H1 (cell line): ENCODE measurements at regions of chr15 and their contacts with region 1.

Region 1: GRCh38 chr15:32844118-32844711 is 126.4 kb downstream of the GREM1 start:
- DNase-seq: no peak
- H3K4me3 ChIP-seq: no peak overlapping the region
- H3K27ac ChIP-seq: no peak overlapping the region
- H3K4me1 ChIP-seq: peaks cover 0 to under 1% (median 0%) of the 10 kb centered on the region in 4 experiments; a peak in 2 of 7 replicates
- H3K27me3 ChIP-seq: no peaks in the 10 kb centered on the region
- CTCF ChIP-seq: peak in 2 of 3 experiments; percentile 50 to 55; a peak in 3 of 4 replicates
- EP300 ChIP-seq: no peak
- POLR2A ChIP-seq: no peak
- RAD21 ChIP-seq: peak; percentile 65 to 71

Region 2: DNA sequence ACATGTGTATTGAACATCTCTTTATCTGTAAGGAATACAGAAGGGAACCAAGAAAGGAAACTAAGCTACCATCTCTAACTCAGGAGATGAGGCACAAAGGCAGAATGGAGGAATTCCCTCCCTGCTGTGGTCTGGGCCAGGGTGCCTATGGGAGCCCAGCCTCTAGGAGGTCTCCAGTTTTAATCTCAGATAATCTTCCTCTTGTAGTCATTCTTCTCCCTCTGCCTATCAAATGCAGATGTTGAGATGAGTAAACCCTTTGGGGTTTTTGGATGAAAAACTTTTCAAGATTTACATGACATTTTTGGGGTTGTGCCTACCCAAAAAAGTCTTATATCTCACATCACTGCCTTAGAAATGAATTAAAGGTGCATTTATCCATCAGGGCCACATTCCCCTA is 179.4 kb before region 1 on chr15:
- CTCF ChIA-PET with region 1: interaction called, 26 read pairs
- POLR2A ChIA-PET with region 1: no interaction called
- DNase-seq: no peak
- H3K4me3 ChIP-seq: no peak overlapping the region
- H3K27ac ChIP-seq: no peak overlapping the region
- H3K4me1 ChIP-seq: peaks cover under 1 to 7% (median 3%) of the 10 kb centered on the region in 4 experiments
- H3K27me3 ChIP-seq: no peaks in the 10 kb centered on the region
- CTCF ChIP-seq: no peak
- EP300 ChIP-seq: no peak
- POLR2A ChIP-seq: no peak
- RAD21 ChIP-seq: no peak

Region 3: DNA sequence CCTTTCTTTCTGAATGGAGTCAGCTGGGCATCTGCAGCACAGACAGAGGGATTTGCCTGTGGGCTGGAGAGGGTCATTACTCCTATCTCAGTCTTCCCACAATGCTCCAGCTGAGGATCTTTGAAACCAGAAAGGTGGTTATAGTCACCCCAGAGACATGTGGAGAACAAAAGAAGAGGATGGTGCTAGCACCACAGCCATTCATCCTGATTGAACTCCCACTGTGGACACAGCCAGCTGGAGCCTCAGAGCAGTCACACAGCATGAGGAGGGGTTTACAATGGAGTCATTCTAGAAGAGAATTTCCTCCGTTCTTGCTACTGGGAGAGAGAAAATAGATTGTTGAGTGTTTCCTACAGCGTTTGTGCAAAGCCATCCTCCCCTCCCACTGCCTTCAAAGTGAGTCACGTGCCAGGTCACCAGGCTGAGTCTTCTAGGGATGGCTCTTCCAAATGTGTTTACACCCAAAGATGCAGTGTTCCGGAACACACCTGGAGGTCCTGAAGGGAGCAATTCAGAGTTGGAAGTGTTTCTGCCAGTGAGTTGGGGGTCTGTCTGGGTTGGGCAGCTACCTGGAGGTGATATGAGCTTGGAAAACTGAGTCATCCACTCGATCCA is 145.3 kb before region 1 on chr15:
- CTCF ChIA-PET with region 1: no interaction called
- POLR2A ChIA-PET with region 1: no interaction called
- DNase-seq: no peak
- H3K4me3 ChIP-seq: no peak overlapping the region
- H3K27ac ChIP-seq: no peak overlapping the region
- H3K4me1 ChIP-seq: no peaks in the 10 kb centered on the region; a peak in 1 of 7 replicates
- H3K27me3 ChIP-seq: no peaks in the 10 kb centered on the region
- CTCF ChIP-seq: no peak
- EP300 ChIP-seq: no peak
- POLR2A ChIP-seq: no peak
- RAD21 ChIP-seq: no peak

Region 4: GRCh38 chr15:32818758-32819447 is 25.3 kb before region 1 on chr15:
- CTCF ChIA-PET with region 1: interaction called, 12 read pairs
- POLR2A ChIA-PET with region 1: no interaction called
- DNase-seq: no peak
- H3K4me3 ChIP-seq: no peak overlapping the region
- H3K27ac ChIP-seq: no peak overlapping the region
- H3K4me1 ChIP-seq: no peaks in the 10 kb centered on the region
- H3K27me3 ChIP-seq: peaks cover 0 to 1% (median 0%) of the 10 kb centered on the region in 4 experiments; a peak in 1 of 7 replicates
- CTCF ChIP-seq: no peak
- EP300 ChIP-seq: no peak
- POLR2A ChIP-seq: no peak
- RAD21 ChIP-seq: no peak

Region 5: DNA sequence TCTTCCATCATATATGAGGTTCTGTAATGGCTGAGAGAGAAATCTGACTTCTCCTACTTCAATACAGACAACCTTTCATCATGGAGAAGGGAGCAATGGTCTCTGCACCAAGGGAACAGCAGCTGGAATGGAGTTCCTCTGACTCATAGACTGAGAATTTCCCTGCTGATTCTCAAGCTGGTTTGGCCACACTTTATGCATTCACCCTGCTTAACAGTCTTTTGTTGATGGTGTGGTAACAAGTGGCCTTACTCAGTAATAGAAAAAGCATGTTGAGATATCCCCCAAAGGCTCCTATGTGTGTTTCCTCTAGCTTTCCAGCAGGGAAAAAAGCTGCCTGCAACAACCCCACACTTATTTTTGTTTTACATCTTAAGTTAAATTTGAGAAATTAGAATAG is 11.7 kb after region 1 on chr15:
- CTCF ChIA-PET with region 1: interaction called, 32 read pairs
- POLR2A ChIA-PET with region 1: interaction called, 3 read pairs
- DNase-seq: peak in 1 of 2 experiments; percentile 50
- H3K4me3 ChIP-seq: no peak overlapping the region
- H3K27ac ChIP-seq: no peak overlapping the region
- H3K4me1 ChIP-seq: peaks cover 0 to 3% (median 1%) of the 10 kb centered on the region in 4 experiments; a peak in 1 of 7 replicates
- H3K27me3 ChIP-seq: no peaks in the 10 kb centered on the region
- CTCF ChIP-seq: no peak
- EP300 ChIP-seq: no peak
- POLR2A ChIP-seq: no peak
- RAD21 ChIP-seq: no peak

Region 6: GRCh38 chr15:32888221-32888761 is 44.1 kb after region 1 on chr15:
- CTCF ChIA-PET with region 1: interaction called, 23 read pairs
- POLR2A ChIA-PET with region 1: no interaction called
- DNase-seq: no peak
- H3K4me3 ChIP-seq: no peak overlapping the region
- H3K27ac ChIP-seq: no peak overlapping the region
- H3K4me1 ChIP-seq: peaks cover 0 to 4% (median 0%) of the 10 kb centered on the region in 4 experiments; a peak in 2 of 7 replicates
- H3K27me3 ChIP-seq: no peaks in the 10 kb centered on the region
- CTCF ChIP-seq: no peak
- EP300 ChIP-seq: no peak
- POLR2A ChIP-seq: no peak
- RAD21 ChIP-seq: no peak

Region 7: GRCh38 chr15:32943711-32944110 is 99.5 kb after region 1 on chr15:
- CTCF ChIA-PET with region 1: interaction called, 14 read pairs
- POLR2A ChIA-PET with region 1: no interaction called
- DNase-seq: no peak
- H3K4me3 ChIP-seq: no peak overlapping the region
- H3K27ac ChIP-seq: no peak overlapping the region
- H3K4me1 ChIP-seq: no peaks in the 10 kb centered on the region
- H3K27me3 ChIP-seq: no peaks in the 10 kb centered on the region
- CTCF ChIP-seq: no peak
- EP300 ChIP-seq: no peak
- POLR2A ChIP-seq: no peak
- RAD21 ChIP-seq: no peak

Region 8: GRCh38 chr15:32994810-32995424 is 150.7 kb after region 1 on chr15:
- CTCF ChIA-PET with region 1: interaction called, 48 read pairs
- POLR2A ChIA-PET with region 1: interaction called, 3 read pairs
- DNase-seq: no peak
- H3K4me3 ChIP-seq: no peak overlapping the region
- H3K27ac ChIP-seq: no peak overlapping the region
- H3K4me1 ChIP-seq: no peaks in the 10 kb centered on the region; a peak in 1 of 7 replicates
- H3K27me3 ChIP-seq: no peaks in the 10 kb centered on the region
- CTCF ChIP-seq: peak in 2 of 3 experiments; percentile 15 to 42; a peak in 2 of 4 replicates
- EP300 ChIP-seq: no peak
- POLR2A ChIP-seq: no peak
- RAD21 ChIP-seq: peak in 1 of 2 experiments; percentile 68

Region 9: GRCh38 chr15:33045066-33045810 is 201.0 kb after region 1 on chr15:
- CTCF ChIA-PET with region 1: no interaction called
- POLR2A ChIA-PET with region 1: no interaction called
- DNase-seq: no peak
- H3K4me3 ChIP-seq: no peak overlapping the region
- H3K27ac ChIP-seq: no peak overlapping the region
- H3K4me1 ChIP-seq: no peaks in the 10 kb centered on the region
- H3K27me3 ChIP-seq: no peaks in the 10 kb centered on the region
- CTCF ChIP-seq: no peak
- EP300 ChIP-seq: no peak
- POLR2A ChIP-seq: no peak
- RAD21 ChIP-seq: no peak

Region 10: GRCh38 chr15:33104212-33104611 is 260.0 kb after region 1 on chr15:
- CTCF ChIA-PET with region 1: no interaction called
- POLR2A ChIA-PET with region 1: no interaction called
- DNase-seq: no peak
- H3K4me3 ChIP-seq: no peak overlapping the region
- H3K27ac ChIP-seq: no peak overlapping the region
- H3K4me1 ChIP-seq: no peaks in the 10 kb centered on the region
- H3K27me3 ChIP-seq: no peaks in the 10 kb centered on the region
- CTCF ChIP-seq: no peak
- EP300 ChIP-seq: no peak
- POLR2A ChIP-seq: no peak
- RAD21 ChIP-seq: no peak